Activated CD4-positive, alpha-beta memory T cell treated with anti-CD3 and anti-CD28 coated beads for 36 hours (primary cell): ENCODE measurements at regions of chr5 and their contacts with region 1.

Region 1: DNA sequence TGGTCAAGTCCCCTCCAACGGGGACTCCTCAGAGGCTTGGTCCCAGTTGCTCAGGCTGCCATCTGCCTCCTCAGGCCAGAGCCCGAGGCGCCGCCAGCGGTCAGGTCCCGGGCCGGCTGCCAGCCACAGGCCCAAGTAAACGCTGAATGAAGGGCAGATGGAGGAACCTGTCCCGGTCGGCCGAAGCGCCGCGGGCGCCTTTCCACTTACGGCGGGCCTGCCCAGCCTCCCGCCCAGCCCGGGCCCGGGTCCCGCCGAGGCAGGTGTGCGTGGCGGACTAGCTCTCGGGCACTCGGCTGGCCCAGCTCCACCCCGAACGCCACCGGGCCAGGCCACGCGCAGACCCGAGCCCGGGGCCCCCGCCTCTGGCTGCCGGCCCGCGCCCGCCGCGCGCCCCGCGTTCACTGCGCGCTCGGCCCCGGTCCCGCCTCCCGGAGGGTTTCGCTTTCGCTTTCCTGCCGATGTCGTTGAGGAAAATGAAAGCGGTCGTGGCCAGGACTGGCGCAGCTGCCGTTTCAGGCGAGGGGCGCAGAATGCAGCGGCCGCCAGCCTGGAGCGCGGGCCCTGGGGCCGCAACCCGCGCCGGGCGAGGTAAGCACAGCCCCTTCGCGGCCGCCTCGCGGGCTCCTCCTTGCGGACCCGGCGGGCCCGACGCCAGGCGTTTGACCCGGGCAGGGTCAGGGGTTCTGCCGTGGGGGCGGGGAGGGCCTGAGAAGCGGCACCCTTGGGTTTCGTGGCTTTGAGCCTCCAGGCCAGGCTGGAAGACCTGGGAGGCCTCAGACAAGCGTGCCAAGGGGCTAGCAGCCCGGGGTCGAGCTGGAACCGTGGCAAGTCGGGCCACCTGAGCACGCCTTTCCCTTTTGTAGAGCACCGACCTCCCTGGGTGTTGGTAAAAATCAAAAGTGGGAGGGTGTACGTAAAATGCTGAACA is 41.2 kb downstream of the SLC22A5 start:
- DNase-seq: peak; percentile 90
- H3K4me3 Mint-ChIP-seq: peak overlapping the region; percentile 93
- H3K27ac Mint-ChIP-seq: peak overlapping the region; percentile 96
- H3K4me1 Mint-ChIP-seq: peaks cover 65% of the 10 kb centered on the region
- H3K27me3 Mint-ChIP-seq: no peaks in the 10 kb centered on the region

Region 2: GRCh38 chr5:132134384-132134783 is 276.3 kb before region 1 on chr5:
- CTCF ChIA-PET with region 1: no interaction called
- POLR2A ChIA-PET with region 1: no interaction called
- intact Hi-C with region 1: no loop called
- DNase-seq: no peak
- H3K4me3 Mint-ChIP-seq: no peak overlapping the region
- H3K27ac Mint-ChIP-seq: no peak overlapping the region
- H3K4me1 Mint-ChIP-seq: peaks cover 6% of the 10 kb centered on the region
- H3K27me3 Mint-ChIP-seq: peaks cover 9% of the 10 kb centered on the region

Region 3: GRCh38 chr5:132354381-132355139 is 56.2 kb before region 1 on chr5:
- CTCF ChIA-PET with region 1: no interaction called
- POLR2A ChIA-PET with region 1: no interaction called
- intact Hi-C with region 1: no loop called
- DNase-seq: no peak
- H3K4me3 Mint-ChIP-seq: no peak overlapping the region
- H3K27ac Mint-ChIP-seq: no peak overlapping the region
- H3K4me1 Mint-ChIP-seq: no peaks in the 10 kb centered on the region
- H3K27me3 Mint-ChIP-seq: no peaks in the 10 kb centered on the region

Region 4: DNA sequence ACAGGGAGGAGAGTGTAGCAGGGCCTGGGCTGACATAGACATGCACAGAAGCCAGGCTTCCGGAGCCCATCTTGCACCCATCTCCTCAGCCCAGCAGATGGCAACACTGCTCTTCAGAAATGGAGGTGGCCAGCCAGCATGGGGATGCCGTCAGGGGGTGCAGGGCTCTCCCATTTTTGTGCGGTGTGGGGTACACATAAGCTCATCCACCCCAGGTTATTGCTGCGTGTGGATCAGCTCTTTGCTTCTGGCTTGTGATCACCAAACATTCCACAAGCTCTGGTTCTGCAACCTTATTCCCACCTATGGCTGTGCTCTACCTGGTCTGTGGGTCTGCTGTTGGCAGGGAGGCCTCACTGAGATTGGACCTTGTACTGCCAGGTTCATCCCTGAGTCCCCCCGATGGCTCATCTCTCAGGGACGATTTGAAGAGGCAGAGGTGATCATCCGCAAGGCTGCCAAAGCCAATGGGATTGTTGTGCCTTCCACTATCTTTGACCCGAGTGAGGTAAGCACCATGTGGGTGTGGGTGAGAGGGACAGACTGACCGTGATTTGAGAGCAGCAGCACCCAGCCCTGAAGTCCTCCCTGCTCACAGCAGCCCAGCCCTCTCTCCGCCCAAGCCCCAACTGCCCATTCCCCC is 24.0 kb before region 1 on chr5:
- CTCF ChIA-PET with region 1: interaction called, 37 read pairs
- POLR2A ChIA-PET with region 1: interaction called, 12 read pairs
- intact Hi-C with region 1: loop called (anchors 1 kb)
- DNase-seq: peak; percentile 87
- H3K4me3 Mint-ChIP-seq: no peak overlapping the region
- H3K27ac Mint-ChIP-seq: peak overlapping the region; percentile 14
- H3K4me1 Mint-ChIP-seq: peaks cover 42% of the 10 kb centered on the region
- H3K27me3 Mint-ChIP-seq: no peaks in the 10 kb centered on the region

Region 5: GRCh38 chr5:132394667-132395259 is 16.0 kb before region 1 on chr5:
- CTCF ChIA-PET with region 1: interaction called, 37 read pairs
- POLR2A ChIA-PET with region 1: interaction called, 12 read pairs
- intact Hi-C with region 1: loop called (anchors 1 kb)
- DNase-seq: no peak
- H3K4me3 Mint-ChIP-seq: no peak overlapping the region
- H3K27ac Mint-ChIP-seq: no peak overlapping the region
- H3K4me1 Mint-ChIP-seq: peaks cover 75% of the 10 kb centered on the region
- H3K27me3 Mint-ChIP-seq: no peaks in the 10 kb centered on the region

Region 6: DNA sequence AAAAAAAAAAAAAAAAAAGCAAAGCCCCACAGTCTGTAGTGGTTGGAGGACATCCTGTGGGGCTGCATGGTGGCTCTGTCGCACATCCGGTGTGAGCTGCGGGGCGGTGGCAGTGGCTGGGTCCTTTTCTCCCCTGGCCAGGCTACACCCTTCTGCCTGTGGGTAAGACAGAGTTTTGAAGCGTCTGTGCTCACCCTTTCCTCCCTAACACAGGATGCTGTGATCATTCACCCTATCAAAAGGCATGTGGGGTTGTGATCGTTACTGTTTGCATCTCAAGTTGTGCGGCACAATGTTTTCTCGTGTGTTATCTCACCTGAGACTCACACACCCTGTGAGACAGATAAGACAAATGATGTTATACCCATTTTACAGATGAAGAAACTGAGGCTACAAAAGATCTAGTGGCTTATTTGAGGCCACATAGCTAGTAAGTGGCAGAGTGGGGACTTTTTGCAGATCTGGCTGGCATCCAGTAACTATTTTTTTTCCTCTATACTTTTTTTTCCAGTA is 62.4 kb after region 1 on chr5:
- CTCF ChIA-PET with region 1: interaction called, 16 read pairs
- POLR2A ChIA-PET with region 1: interaction called, 31 read pairs
- intact Hi-C with region 1: no loop called
- DNase-seq: peak; percentile 90
- H3K4me3 Mint-ChIP-seq: peak overlapping the region; percentile 7
- H3K27ac Mint-ChIP-seq: peak overlapping the region; percentile 91
- H3K4me1 Mint-ChIP-seq: peaks cover 75% of the 10 kb centered on the region
- H3K27me3 Mint-ChIP-seq: no peaks in the 10 kb centered on the region

Region 7: GRCh38 chr5:132479111-132479951 is 68.6 kb after region 1 on chr5:
- CTCF ChIA-PET with region 1: interaction called, 16 read pairs
- POLR2A ChIA-PET with region 1: interaction called, 31 read pairs
- intact Hi-C with region 1: no loop called
- DNase-seq: no peak
- H3K4me3 Mint-ChIP-seq: peak overlapping the region; percentile 28
- H3K27ac Mint-ChIP-seq: peak overlapping the region; percentile 87
- H3K4me1 Mint-ChIP-seq: peaks cover 68% of the 10 kb centered on the region
- H3K27me3 Mint-ChIP-seq: no peaks in the 10 kb centered on the region